PC-9 (cell line): ENCODE measurements at regions of chr19 and their contacts with region 1.

Region 1: GRCh38 chr19:37172368-37173366 is at the start of gene ZNF585A:
- DNase-seq: peak; percentile 90 to 93
- H3K4me3 ChIP-seq: peak within 1 kb of the TSS; percentile 89
- H3K27ac ChIP-seq: 0 out of 2 replicates have a peak within 1 kb of the TSS, but pooled peaks have one; percentile 3
- H3K4me1 ChIP-seq: no peaks in the 10 kb centered on the region; the same call in 1 of the 2 replicates
- H3K27me3 ChIP-seq: no peaks in the 10 kb centered on the region
- CTCF ChIP-seq: no peak
- total RNA-seq, gene ZNF585A: 9.9 and 13.8 TPM in 2 replicates

Region 2: GRCh38 chr19:37077934-37078725 is 94.5 kb before region 1 on chr19 and contains the start of gene ZNF420:
- CTCF ChIA-PET with region 1: no interaction called
- POLR2A ChIA-PET with region 1: no interaction called
- intact Hi-C with region 1: loop called (anchors 2 kb)
- DNase-seq: peak; percentile 90 to 94
- H3K4me3 ChIP-seq: peak within 1 kb of the TSS; percentile 96
- H3K27ac ChIP-seq: peak within 1 kb of the TSS; percentile 27
- H3K4me1 ChIP-seq: peaks cover 7% of the 10 kb centered on the region
- H3K27me3 ChIP-seq: no peaks in the 10 kb centered on the region
- CTCF ChIP-seq: no peak
- total RNA-seq, gene ZNF420: 4.7 and 8.7 TPM in 2 replicates